PC-9 (cell line): ENCODE measurements at regions of chr5 and their contacts with region 1.

Region 1: DNA sequence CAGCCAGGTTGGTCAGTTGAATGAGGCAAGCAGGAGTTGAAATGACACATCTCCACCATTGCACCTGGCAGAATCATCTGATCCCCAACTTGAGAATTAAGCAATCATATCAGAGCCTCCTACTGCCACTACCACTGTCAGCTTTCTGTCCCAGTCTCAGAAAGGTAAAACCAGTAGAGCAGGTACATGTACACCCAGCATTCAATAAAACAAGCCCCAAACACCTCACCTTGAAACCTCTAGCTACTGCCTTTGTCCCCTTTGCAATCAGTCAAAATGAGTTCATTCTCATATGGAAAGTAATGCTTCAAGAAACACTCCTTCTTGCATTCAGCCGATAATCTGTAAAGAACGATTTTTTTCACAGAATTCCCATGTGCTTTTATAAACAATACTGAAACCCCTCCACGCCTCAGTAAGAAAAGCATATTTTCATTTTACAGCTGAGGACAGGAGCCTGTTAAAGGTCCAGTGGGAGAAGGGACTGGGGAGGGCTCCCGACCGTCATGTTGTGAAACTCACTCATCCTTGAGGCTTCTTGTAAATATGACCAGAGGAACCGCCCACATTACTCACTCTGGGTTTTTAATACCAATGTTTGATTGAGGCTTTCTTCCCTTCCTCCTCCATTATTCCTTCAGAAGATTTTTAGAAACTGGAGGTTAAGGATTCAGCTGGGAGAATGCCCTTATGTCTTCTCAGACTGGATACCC is 61.2 kb upstream of the GLRX start:
- DNase-seq: peak; percentile 27 to 89
- H3K4me3 ChIP-seq: peak overlapping the region; percentile 22; the same call in 1 of the 2 replicates
- H3K27ac ChIP-seq: peak overlapping the region; percentile 75
- H3K4me1 ChIP-seq: peaks cover 26% of the 10 kb centered on the region
- H3K27me3 ChIP-seq: no peaks in the 10 kb centered on the region
- CTCF ChIP-seq: no peak

Region 2: DNA sequence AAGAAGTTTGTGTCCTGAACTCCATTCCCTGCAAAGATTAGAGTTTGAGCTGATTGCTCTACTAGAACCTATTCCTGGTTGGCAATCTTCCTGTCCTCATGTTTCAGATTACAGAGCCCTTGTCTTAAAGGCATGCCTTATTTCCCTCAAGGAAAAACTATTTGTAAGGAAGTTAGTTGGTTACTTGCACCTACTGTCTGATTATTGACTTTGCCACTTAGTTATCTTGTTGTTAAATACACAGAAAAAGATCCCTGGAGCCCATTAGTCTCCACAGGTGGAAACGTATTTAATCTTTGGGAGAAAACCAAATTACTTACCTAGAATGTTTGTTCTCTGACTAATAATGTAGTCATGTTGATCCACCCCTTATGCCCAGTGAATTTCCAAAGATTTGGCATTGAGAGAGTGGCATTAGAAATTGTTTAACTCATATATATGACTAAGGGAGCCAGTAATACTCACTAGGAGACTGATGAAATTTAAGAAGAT is 210.2 kb after region 1 on chr5:
- CTCF ChIA-PET with region 1: no interaction called
- POLR2A ChIA-PET with region 1: interaction called, 11 read pairs
- intact Hi-C with region 1: no loop called
- DNase-seq: peak; percentile 21 to 97
- H3K4me3 ChIP-seq: no peak overlapping the region
- H3K27ac ChIP-seq: peak overlapping the region; percentile 88
- H3K4me1 ChIP-seq: peaks cover 36% of the 10 kb centered on the region
- H3K27me3 ChIP-seq: no peaks in the 10 kb centered on the region
- CTCF ChIP-seq: no peak

Region 3: GRCh38 chr5:96151891-96152290 is 268.1 kb after region 1 on chr5:
- CTCF ChIA-PET with region 1: no interaction called
- POLR2A ChIA-PET with region 1: no interaction called
- intact Hi-C with region 1: loop called (anchors 10 kb)
- DNase-seq: no peak
- H3K4me3 ChIP-seq: no peak overlapping the region
- H3K27ac ChIP-seq: no peak overlapping the region
- H3K4me1 ChIP-seq: peaks cover 16% of the 10 kb centered on the region
- H3K27me3 ChIP-seq: no peaks in the 10 kb centered on the region
- CTCF ChIP-seq: no peak